Cardiac septum (tissue), 1 donor: ENCODE measurements at regions of chr5 and their contacts with region 1.

Region 1: GRCh38 chr5:157548513-157549297 is 26.9 kb downstream of the ADAM19 start:
- DNase-seq: no peak

Region 2: DNA sequence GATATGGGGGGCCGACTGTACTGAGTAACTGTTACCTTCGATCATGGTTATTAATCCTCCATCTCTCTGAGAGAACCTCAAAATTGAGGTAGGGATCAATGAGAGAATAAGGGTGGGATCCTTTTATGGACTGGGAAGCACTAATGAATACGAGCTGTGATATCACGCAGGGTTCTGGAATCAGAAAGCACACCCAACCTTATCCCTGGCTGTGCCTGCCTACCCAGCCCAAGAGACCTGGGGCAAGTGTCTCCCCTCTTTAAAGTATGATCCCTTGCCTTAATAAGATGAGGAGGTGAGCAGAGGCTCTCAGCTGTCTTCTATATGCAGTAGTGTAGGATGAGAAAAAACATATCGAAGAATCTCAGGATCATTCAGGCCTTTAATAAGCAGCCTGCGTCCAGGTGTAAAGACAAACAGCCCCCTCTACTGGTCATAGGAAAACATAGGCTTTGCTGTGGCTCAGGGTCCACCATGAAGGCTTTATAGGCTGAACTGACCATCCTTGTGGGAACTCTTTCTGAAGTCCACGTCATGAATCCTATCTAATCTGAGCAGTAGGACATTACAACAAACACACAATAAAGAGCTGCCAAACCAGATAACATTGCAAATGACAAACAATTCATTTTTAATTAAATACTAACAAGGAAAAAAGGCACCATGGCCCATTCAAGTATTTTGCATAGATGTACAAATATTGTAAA is 71.8 kb before region 1 on chr5:
- intact Hi-C with region 1: no loop called
- DNase-seq: no peak

Region 3: GRCh38 chr5:157535042-157535865 is 13.5 kb before region 1 on chr5:
- intact Hi-C with region 1: loop called (anchors 2 kb)
- DNase-seq: peak; percentile 81

Region 4: GRCh38 chr5:157640406-157641066 is 91.8 kb after region 1 on chr5:
- intact Hi-C with region 1: no loop called
- DNase-seq: no peak